K562 (cell line): ENCODE measurements at regions of chr4 and their contacts with region 1.

Region 1: DNA sequence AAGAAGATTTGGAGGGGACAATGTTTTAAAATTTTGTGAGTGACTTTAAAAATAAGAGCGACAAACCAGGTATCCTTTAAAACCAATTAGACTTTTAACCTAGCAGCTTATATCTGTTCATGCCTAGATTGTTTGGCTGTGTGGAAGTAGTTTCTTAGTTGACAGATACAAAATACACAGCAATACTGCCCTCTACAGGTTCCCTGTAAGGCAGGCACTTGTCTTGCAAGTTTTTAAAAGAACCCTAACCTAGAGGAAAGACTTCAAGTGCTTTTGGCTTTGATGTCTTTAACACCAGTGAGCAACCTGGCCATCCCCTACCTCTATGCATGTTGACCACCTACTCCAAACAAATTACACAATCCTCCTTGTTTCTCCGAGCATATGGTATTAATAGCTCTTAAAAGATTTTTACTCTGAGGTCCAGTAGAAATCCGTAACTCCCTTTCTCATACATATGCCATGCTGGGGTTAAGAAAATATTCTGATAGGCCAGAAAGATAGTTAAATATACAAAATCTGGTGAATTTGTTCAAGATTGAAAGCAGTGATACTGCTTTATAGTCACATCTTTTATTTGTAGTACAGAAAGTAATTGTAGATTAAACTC is 273.0 kb downstream of the ARHGAP24 start:
- DNase-seq: peak; percentile 30 to 74 (median 40)
- ATAC-seq: peak; percentile 92
- H3K4me3 ChIP-seq: no peak overlapping the region
- H3K27ac ChIP-seq: no peak overlapping the region
- H3K4me1 ChIP-seq: peaks cover 0 to 1% of the 10 kb centered on the region in 2 experiments; a peak in 1 of 5 replicates
- H3K27me3 ChIP-seq: no peaks in the 10 kb centered on the region
- CTCF ChIP-seq: peak; percentile 60 to 85 (median 79); a peak in 5 of 6 replicates
- EP300 ChIP-seq: no peak
- POLR2A ChIP-seq: no peak
- RAD21 ChIP-seq: peak; percentile 92 to 94

Region 2: DNA sequence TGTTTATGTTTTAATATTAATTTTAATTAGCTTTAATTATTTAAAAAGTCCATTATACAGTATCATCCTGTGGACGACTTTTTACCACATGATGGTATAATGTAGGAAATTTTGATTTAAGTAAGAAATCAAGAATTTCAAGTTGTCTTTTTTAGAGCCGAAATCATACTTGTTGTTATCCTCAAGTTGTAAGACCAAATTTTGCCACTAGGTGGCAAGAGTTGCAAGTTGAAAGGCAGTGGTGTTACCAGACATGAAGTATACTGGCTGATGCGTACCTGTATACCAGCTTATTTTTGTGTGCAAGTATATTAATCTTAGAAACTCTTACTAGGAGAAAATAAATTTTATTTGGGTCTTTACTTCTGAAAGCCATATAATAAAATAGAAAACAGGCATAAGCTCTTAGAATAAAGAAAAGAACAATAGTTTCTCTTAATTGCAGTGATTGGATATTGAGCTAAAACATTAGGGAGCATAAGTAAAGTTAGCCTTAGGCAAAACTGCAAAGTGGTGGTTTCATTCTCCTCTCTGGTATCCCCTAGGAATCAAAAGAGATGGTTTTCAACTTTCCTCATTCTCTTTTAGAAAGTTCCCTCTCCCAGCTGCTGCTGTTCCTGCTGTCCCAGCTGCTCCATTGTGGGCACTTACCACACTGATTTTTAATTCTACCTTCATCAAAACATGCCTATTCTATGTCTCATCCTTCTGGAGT is 663.5 kb before region 1 on chr4:
- CTCF ChIA-PET with region 1: no interaction called
- POLR2A ChIA-PET with region 1: no interaction called
- in situ Hi-C with region 1: no loop called
- intact Hi-C with region 1: loop called (anchors 5 kb)
- DNase-seq: peak; percentile 12 to 69 (median 32)
- ATAC-seq: peak; percentile 76
- H3K4me3 ChIP-seq: no peak overlapping the region
- H3K27ac ChIP-seq: no peak overlapping the region
- H3K4me1 ChIP-seq: no peaks in the 10 kb centered on the region
- H3K27me3 ChIP-seq: no peaks in the 10 kb centered on the region
- CTCF ChIP-seq: peak; percentile 38 to 68 (median 55); a peak in 5 of 6 replicates
- EP300 ChIP-seq: no peak
- POLR2A ChIP-seq: no peak
- RAD21 ChIP-seq: peak; percentile 53 to 73

Region 3: GRCh38 chr4:85147439-85148076 is 600.4 kb before region 1 on chr4:
- CTCF ChIA-PET with region 1: interaction called, 3 read pairs
- POLR2A ChIA-PET with region 1: no interaction called
- in situ Hi-C with region 1: loop called (anchors 25 kb)
- intact Hi-C with region 1: loop called (anchors 5 kb)
- DNase-seq: peak; percentile 18 to 62 (median 26)
- ATAC-seq: peak; percentile 89
- H3K4me3 ChIP-seq: no peak overlapping the region
- H3K27ac ChIP-seq: no peak overlapping the region
- H3K4me1 ChIP-seq: no peaks in the 10 kb centered on the region
- H3K27me3 ChIP-seq: no peaks in the 10 kb centered on the region
- CTCF ChIP-seq: peak; percentile 38 to 65 (median 63); a peak in 5 of 6 replicates
- EP300 ChIP-seq: no peak
- POLR2A ChIP-seq: no peak
- RAD21 ChIP-seq: peak; percentile 63 to 73

Region 4: DNA sequence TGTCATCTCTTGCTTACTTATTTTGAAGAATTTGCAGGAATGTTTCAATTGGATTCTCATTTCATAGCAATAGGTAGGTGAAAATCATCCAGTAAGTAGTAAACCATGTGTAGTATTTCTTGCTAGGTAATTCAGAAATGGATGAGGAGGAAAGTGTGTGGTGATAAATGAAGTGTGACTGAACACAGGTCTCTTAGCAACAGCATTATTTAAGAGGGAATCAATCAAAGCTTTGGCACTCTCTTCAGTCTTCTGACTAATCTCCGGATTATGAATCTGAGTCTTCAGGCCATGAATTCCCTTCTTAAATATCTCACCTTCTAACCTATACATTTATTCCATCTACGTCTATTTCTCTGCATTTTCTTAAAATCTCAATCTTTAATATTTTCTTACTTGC is 328.9 kb before region 1 on chr4:
- CTCF ChIA-PET with region 1: interaction called, 9 read pairs
- POLR2A ChIA-PET with region 1: no interaction called
- in situ Hi-C with region 1: no loop called
- intact Hi-C with region 1: loop called (anchors 2 kb)
- DNase-seq: no peak
- ATAC-seq: no peak
- H3K4me3 ChIP-seq: no peak overlapping the region
- H3K27ac ChIP-seq: no peak overlapping the region
- H3K4me1 ChIP-seq: no peaks in the 10 kb centered on the region
- H3K27me3 ChIP-seq: no peaks in the 10 kb centered on the region
- CTCF ChIP-seq: no peak
- EP300 ChIP-seq: no peak
- POLR2A ChIP-seq: no peak
- RAD21 ChIP-seq: no peak

Region 5: GRCh38 chr4:85514117-85514516 is 233.9 kb before region 1 on chr4:
- CTCF ChIA-PET with region 1: no interaction called
- POLR2A ChIA-PET with region 1: no interaction called
- in situ Hi-C with region 1: no loop called
- intact Hi-C with region 1: loop called (anchors 10 kb)
- DNase-seq: no peak
- ATAC-seq: no peak
- H3K4me3 ChIP-seq: no peak overlapping the region
- H3K27ac ChIP-seq: no peak overlapping the region
- H3K4me1 ChIP-seq: no peaks in the 10 kb centered on the region
- H3K27me3 ChIP-seq: peaks cover 0 to 5% of the 10 kb centered on the region in 2 experiments; a peak in 2 of 5 replicates
- CTCF ChIP-seq: no peak
- EP300 ChIP-seq: no peak
- POLR2A ChIP-seq: no peak
- RAD21 ChIP-seq: no peak